Right cardiac atrium (tissue), 5 donors: ENCODE measurements at regions of chr6 and their contacts with region 1.

Region 1: DNA sequence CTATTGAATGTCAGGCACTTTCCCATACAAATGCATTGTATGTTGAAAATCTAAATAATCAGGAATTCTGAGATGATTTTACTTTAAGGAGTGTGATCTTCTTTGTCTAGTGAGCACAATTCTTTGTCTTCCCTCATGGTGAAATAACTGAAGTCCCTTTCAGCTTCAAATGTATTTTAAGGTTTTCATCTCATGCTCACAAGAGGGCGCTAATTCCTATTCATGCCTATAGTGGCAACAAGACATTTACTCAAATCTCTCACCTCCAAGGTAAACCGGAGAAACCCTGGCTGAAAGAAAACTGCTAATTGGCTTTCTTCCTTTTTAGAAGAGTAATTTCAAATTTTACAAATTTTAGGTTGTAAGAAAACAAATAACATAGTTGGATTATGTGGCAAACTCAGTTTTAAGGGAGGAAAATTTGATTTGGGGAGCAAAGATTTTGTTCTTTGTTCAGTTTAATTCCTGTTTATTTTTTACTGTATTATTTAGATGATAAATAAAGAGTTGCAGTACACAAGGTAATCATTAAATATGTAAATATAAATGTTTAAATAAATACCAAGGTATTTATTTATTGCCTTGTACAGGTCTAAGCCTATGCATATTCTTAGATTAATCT is 69.1 kb downstream of the SLC35F1 start:
- DNase-seq: no peak
- ATAC-seq: no peak
- H3K4me3 ChIP-seq: no peak overlapping the region
- H3K27ac ChIP-seq: no peak overlapping the region
- H3K4me1 ChIP-seq: no peaks in the 10 kb centered on the region
- H3K27me3 ChIP-seq: no peaks in the 10 kb centered on the region

Region 2: GRCh38 chr6:117817499-117817898 is 158.6 kb before region 1 on chr6:
- intact Hi-C with region 1: no loop called
- DNase-seq: no peak
- ATAC-seq: no peak
- H3K4me3 ChIP-seq: no peak overlapping the region
- H3K27ac ChIP-seq: no peak overlapping the region
- H3K4me1 ChIP-seq: no peaks in the 10 kb centered on the region
- H3K27me3 ChIP-seq: no peaks in the 10 kb centered on the region

Region 3: DNA sequence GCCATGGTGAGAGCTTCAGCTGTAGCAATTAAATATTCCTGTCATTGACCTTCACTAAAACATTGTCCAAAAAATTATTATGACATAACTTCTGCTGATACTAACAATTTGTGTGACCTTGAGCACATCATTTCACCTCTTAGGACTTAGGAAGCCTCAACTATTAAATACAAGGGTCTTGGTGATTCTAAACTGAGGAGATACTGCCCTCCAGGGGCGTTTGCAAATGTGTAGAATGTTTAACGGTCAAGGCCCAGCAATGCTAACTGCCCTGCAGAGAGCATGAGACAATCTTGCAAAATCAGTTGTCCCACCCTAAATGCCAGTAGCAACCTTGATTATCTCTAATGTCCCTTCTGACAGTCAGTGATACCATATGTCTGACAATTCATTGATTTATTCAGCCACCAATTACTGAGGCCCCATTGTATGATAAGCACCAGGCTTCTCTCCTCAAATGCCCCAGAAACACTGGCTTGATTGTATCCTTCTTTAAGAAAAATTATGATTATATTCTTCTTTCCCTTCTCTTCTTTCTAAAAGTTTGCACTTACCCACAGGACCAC is 287.9 kb after region 1 on chr6:
- intact Hi-C with region 1: loop called in 2 of 4 experiments (anchors 5 kb)
- DNase-seq: no peak
- ATAC-seq: peak; percentile 59 to 60
- H3K4me3 ChIP-seq: no peak overlapping the region
- H3K27ac ChIP-seq: no peak overlapping the region
- H3K4me1 ChIP-seq: no peaks in the 10 kb centered on the region
- H3K27me3 ChIP-seq: no peaks in the 10 kb centered on the region